ENCODE measurements at regions of chr13 and their contacts with region 1.

Region 1: GRCh38 chr13:31824705-31825517 is 85.6 kb downstream of the RXFP2 start:
- DNase-seq: no peak
- H3K4me3 Mint-ChIP-seq: no peak overlapping the region
- H3K27ac Mint-ChIP-seq: no peak overlapping the region
- H3K4me1 Mint-ChIP-seq: peaks cover 6% of the 10 kb centered on the region
- H3K27me3 Mint-ChIP-seq: no peaks in the 10 kb centered on the region
- CTCF ChIP-seq: no peak

Region 2: GRCh38 chr13:32041429-32041828 is 216.5 kb after region 1 on chr13:
- CTCF ChIA-PET with region 1: interaction called, 10 read pairs
- intact Hi-C with region 1: no loop called
- DNase-seq: no peak
- H3K4me3 Mint-ChIP-seq: no peak overlapping the region
- H3K27ac Mint-ChIP-seq: no peak overlapping the region
- H3K4me1 Mint-ChIP-seq: peaks cover 17% of the 10 kb centered on the region
- H3K27me3 Mint-ChIP-seq: no peaks in the 10 kb centered on the region
- CTCF ChIP-seq: no peak